Heart left ventricle (tissue), 16 donors: ENCODE measurements at regions of chr6 and their contacts with region 1.

Region 1: GRCh38 chr6:11700118-11700718 is 78.4 kb downstream of the ADTRP start:
- DNase-seq: no peak
- ATAC-seq: no peak
- H3K4me3 ChIP-seq: no peak overlapping the region
- H3K27ac ChIP-seq: no peak overlapping the region
- H3K4me1 ChIP-seq: peaks cover 0 to 5% (median 0%) of the 10 kb centered on the region in 12 donors
- H3K27me3 ChIP-seq: no peaks in the 10 kb centered on the region
- CTCF ChIP-seq: peak; percentile 26 to 68 (median 46)
- POLR2A ChIP-seq: no peak

Region 2: DNA sequence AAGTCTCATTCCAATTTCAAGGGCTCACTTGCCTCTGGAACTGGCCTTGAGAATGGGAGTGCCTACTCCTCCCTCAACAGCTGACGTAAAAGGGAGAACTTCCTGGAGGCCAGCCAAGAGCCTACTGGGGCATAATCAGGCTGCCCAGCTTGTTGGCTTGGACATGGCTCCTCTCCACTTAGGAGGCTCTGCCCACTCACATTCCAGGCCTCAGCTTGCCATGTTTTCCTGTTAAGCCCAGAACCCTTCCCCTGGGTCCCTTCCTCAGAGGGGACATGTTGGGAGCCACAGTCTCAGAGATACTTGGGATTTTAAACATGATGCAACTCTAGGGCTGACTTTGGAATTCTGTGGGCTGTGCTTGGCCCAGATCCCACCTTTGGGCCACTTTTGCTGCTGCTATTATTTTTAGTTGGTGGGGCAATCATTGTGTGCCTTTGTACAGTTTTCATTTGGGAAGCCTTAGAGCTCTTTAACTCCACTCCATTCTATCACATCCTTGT is 109.9 kb after region 1 on chr6:
- intact Hi-C with region 1: loop called in 1 of 10 experiments (anchors 10 kb)
- DNase-seq: peak; percentile 74 to 92 (median 84)
- ATAC-seq: peak; percentile 95 to 97 (median 95)
- H3K4me3 ChIP-seq: no peak overlapping the region
- H3K27ac ChIP-seq: peak overlapping the region in 11 of 12 donors; percentile 22 to 81 (median 69)
- H3K4me1 ChIP-seq: peaks cover 3 to 28% (median 15%) of the 10 kb centered on the region in 12 donors
- H3K27me3 ChIP-seq: no peaks in the 10 kb centered on the region
- CTCF ChIP-seq: no peak
- POLR2A ChIP-seq: no peak

Region 3: DNA sequence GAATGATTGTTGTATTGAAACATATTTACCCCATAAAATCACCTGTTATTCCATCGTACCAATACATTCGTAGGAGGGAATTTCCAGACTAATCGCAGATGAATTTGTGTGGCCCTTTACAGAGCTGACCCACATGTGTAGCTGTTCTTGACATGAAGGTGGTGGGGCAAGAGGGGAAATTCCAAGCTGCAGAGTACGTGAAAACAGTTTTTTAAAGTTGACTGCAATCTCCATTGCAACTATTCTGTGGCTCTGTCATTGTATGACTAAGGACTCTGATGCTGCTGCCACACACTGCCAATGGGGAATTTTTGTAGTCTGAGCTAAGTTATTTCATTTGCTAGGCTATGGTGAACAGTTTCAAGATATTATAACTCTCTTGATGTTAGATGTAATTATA is 124.8 kb after region 1 on chr6:
- intact Hi-C with region 1: loop called in 1 of 10 experiments (anchors 10 kb)
- DNase-seq: no peak
- ATAC-seq: no peak
- H3K4me3 ChIP-seq: no peak overlapping the region
- H3K27ac ChIP-seq: no peak overlapping the region
- H3K4me1 ChIP-seq: peaks cover 0 to 5% (median 0%) of the 10 kb centered on the region in 12 donors
- H3K27me3 ChIP-seq: no peaks in the 10 kb centered on the region
- CTCF ChIP-seq: no peak
- POLR2A ChIP-seq: no peak

Region 4: GRCh38 chr6:12011276-12012076 is 311.3 kb after region 1 on chr6:
- intact Hi-C with region 1: loop called in 6 of 10 experiments (anchors 2 to 10 kb)
- DNase-seq: peak; percentile 98 to 99 (median 99)
- ATAC-seq: peak; percentile 92 to 95 (median 95)
- H3K4me3 ChIP-seq: peak overlapping the region; percentile 61 to 98 (median 78)
- H3K27ac ChIP-seq: peak overlapping the region; percentile 91 to 100 (median 96)
- H3K4me1 ChIP-seq: peaks cover 0 to 39% (median 19%) of the 10 kb centered on the region in 12 donors
- H3K27me3 ChIP-seq: no peaks in the 10 kb centered on the region
- CTCF ChIP-seq: no peak
- POLR2A ChIP-seq: no peak

Region 5: GRCh38 chr6:12075067-12075563 is 374.9 kb after region 1 on chr6:
- intact Hi-C with region 1: loop called in 4 of 10 experiments (anchors 5 to 10 kb)
- DNase-seq: no peak
- ATAC-seq: no peak
- H3K4me3 ChIP-seq: no peak overlapping the region
- H3K27ac ChIP-seq: no peak overlapping the region
- H3K4me1 ChIP-seq: peaks cover 0 to 17% (median 0%) of the 10 kb centered on the region in 12 donors
- H3K27me3 ChIP-seq: no peaks in the 10 kb centered on the region
- CTCF ChIP-seq: peak in 9 of 12 donors; percentile 36 to 57 (median 44)
- POLR2A ChIP-seq: no peak